Activated CD4-positive, alpha-beta T cell treated with anti-CD3 and anti-CD28 coated beads for 36 hours (primary cell): ENCODE measurements at regions of chr14 and their contacts with region 1.

Region 1: DNA sequence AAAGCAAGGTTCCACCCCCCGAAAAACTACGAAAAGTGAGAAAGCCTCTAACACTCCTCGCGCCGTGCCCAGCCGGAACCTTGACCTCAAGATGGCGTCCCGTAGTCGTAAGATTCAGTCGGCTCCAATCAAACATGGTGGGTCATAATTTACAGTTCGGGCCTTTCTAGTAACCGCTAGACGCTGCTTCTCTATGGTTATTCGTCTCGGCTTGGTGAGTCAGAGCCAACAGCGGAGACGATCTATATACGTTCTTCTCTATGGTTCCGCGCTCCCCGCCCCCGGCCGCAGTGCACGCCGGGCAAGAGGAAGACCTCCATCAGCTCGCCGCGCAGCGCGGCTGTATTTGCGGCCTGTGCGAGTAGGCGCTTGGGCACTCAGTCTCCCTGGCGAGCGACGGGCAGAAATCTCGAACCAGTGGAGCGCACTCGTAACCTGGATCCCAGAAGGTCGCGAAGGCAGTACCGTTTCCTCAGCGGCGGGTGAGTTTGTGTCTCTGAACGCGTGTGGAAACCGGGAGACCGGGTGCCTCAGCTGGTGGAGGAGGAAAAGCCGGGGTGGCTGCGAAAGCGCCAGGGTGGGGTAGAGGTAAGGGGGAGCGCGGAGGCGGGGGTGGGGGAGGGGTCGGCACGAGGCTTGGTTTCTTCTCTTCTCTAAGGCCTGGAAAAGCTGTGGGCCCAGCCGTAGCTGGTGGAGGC is at the start of gene RBM25:
- DNase-seq: peak; percentile 97
- ATAC-seq: peak; percentile 95
- H3K4me3 Mint-ChIP-seq: no peak within 1 kb of the TSS
- H3K27ac Mint-ChIP-seq: no peak within 1 kb of the TSS
- H3K4me1 Mint-ChIP-seq: peaks cover 31% of the 10 kb centered on the region
- H3K27me3 Mint-ChIP-seq: no peaks in the 10 kb centered on the region
- total RNA-seq, gene RBM25: 95.6 to 115 TPM

Region 2: DNA sequence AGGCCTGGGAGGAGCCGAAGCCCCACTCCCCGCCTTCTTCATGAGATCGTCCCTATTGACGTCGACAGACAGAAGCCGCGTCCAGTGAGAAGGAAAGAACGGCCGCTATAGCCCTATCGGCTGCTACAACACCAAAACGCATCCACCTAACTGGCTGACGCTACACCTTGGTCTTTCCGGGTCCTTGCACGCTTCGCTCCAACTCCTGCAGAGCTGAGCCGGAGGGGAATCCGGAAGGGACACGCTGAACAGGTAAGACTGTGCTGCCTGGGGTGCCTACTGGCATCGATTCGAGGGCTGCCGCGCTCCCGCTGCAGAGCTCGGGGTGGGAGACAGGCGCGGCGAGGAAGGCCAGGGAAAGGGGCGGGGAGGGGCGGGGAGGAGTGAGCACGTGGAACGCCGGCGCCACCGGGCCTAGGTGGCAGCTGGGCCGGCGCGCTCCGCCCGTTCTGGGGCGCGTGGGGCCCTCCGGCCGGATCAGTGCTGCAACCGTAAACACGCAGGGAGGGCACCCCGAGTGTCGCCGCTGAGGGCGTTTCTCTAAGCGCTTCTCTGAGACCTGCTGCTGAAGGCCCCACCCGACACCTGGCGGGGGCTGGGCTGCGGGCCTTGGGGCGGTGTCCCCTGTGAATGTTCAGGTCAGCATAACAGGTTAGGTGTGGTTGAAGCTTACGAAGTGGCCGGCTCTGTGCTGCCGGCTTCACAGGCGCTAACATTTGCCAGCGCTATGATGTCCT is 131.9 kb before region 1 on chr14 and contains the start of gene DCAF4:
- CTCF ChIA-PET with region 1: interaction called, 6 read pairs
- POLR2A ChIA-PET with region 1: interaction called, 8 read pairs
- intact Hi-C with region 1: loop called in 1 of 2 experiments (anchors 1 kb)
- DNase-seq: peak; percentile 96
- ATAC-seq: peak; percentile 99
- H3K4me3 Mint-ChIP-seq: peak within 1 kb of the TSS; percentile 89
- H3K27ac Mint-ChIP-seq: peak within 1 kb of the TSS; percentile 87
- H3K4me1 Mint-ChIP-seq: peaks cover 11% of the 10 kb centered on the region
- H3K27me3 Mint-ChIP-seq: no peaks in the 10 kb centered on the region
- total RNA-seq, gene DCAF4: 16.0 to 21.7 TPM

Region 3: GRCh38 chr14:73091852-73092251 is 33.5 kb after region 1 on chr14:
- CTCF ChIA-PET with region 1: no interaction called
- POLR2A ChIA-PET with region 1: no interaction called
- intact Hi-C with region 1: loop called in 1 of 2 experiments (anchors 5 kb)
- DNase-seq: no peak
- ATAC-seq: no peak
- H3K4me3 Mint-ChIP-seq: no peak overlapping the region
- H3K27ac Mint-ChIP-seq: no peak overlapping the region
- H3K4me1 Mint-ChIP-seq: peaks cover 4% of the 10 kb centered on the region
- H3K27me3 Mint-ChIP-seq: no peaks in the 10 kb centered on the region

Region 4: DNA sequence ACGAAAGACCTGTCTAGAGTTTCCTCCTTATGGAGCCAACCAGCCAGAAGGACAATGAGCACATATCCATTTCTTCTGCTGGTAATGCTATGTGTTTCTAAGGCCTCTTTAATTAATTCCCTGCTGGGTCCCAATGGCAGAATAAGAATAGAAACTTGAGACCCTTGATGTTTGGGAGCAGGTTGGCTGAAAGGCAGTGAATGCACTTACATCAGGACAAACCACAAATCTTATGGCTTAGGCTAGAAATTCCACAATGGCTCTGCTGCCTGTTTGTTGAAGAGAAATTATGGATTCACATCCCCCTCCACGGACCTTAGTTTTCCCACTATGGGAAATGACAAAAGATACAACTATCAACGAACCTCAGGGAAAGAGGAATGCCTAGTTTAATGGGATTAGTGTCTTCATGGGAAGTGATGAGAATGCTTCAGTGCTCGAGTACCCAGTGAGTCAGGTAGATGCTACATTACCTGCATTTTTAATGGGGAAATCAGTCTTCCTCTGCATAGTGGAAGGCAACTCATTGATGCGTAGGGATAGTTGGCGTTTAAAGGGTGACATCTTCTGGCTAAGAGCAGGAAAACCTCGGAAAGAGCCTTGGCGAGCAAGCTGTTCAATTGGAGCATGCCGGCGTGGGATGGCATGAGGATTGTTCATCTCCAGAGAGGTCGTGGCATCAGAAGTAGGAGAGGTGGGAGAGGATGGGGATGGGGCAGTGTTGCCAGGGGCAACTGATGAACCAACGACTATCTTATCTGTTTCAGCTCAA is 225.4 kb after region 1 on chr14:
- CTCF ChIA-PET with region 1: no interaction called
- POLR2A ChIA-PET with region 1: no interaction called
- intact Hi-C with region 1: no loop called
- DNase-seq: no peak
- ATAC-seq: no peak
- H3K4me3 Mint-ChIP-seq: no peak overlapping the region
- H3K27ac Mint-ChIP-seq: no peak overlapping the region
- H3K4me1 Mint-ChIP-seq: no peaks in the 10 kb centered on the region
- H3K27me3 Mint-ChIP-seq: no peaks in the 10 kb centered on the region

Region 5: GRCh38 chr14:73368616-73369015 is 310.2 kb after region 1 on chr14:
- CTCF ChIA-PET with region 1: no interaction called
- POLR2A ChIA-PET with region 1: no interaction called
- intact Hi-C with region 1: no loop called
- DNase-seq: no peak
- ATAC-seq: no peak
- H3K4me3 Mint-ChIP-seq: no peak overlapping the region
- H3K27ac Mint-ChIP-seq: no peak overlapping the region
- H3K4me1 Mint-ChIP-seq: peaks cover 6% of the 10 kb centered on the region
- H3K27me3 Mint-ChIP-seq: no peaks in the 10 kb centered on the region

Region 6: DNA sequence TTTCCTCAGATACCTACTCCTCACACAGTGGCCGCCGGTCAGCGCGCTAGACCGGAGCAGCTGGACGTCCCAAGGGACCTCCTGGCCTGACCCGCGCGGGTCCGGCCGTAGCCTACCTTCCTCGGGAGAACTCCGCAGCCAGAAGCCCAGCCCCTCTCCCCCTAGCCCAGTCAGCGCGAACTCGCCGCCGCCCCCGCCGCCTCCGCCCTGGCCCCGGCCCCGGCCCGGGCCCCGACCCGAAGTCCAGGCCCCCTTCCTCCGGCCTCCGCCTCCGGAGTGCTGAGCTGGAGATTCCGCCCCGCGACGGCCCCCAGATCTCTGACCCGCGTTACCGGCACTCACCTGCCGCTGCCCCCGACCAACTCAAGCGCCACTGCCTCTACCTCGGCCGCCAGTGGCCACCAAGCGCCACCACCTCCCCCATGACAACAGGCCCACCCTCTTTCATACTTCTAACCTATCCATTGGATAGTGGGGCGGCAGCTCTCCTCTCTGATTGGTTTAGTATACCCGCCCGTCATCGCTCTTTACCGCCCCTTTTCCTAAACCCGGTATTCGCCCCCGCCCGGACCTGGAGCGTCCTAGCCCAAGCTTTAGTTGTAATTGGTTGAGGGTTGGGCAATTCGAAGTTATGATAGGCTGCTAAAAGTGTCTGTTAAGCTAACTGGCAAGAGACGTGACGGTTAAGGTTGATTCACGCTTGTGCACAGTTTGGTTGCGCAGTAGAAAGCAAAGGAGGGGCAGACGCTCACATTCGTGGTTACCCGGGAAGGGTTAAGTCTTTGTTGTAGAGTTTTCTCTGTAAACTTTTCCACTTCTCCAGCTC is 400.0 kb after region 1 on chr14 and contains the start of gene NUMB:
- CTCF ChIA-PET with region 1: interaction called, 3 read pairs
- POLR2A ChIA-PET with region 1: no interaction called
- intact Hi-C with region 1: loop called in 1 of 2 experiments (anchors 1 kb)
- DNase-seq: peak; percentile 98
- ATAC-seq: peak; percentile 97
- H3K4me3 Mint-ChIP-seq: peak within 1 kb of the TSS; percentile 95
- H3K27ac Mint-ChIP-seq: peak within 1 kb of the TSS; percentile 96
- H3K4me1 Mint-ChIP-seq: peaks cover 45% of the 10 kb centered on the region
- H3K27me3 Mint-ChIP-seq: no peaks in the 10 kb centered on the region
- total RNA-seq, gene NUMB: 35.7 to 54.9 TPM

Region 7: GRCh38 chr14:73651005-73651404 is 592.6 kb after region 1 on chr14:
- CTCF ChIA-PET with region 1: no interaction called
- POLR2A ChIA-PET with region 1: no interaction called
- intact Hi-C with region 1: no loop called
- DNase-seq: no peak
- ATAC-seq: no peak
- H3K4me3 Mint-ChIP-seq: no peak overlapping the region
- H3K27ac Mint-ChIP-seq: no peak overlapping the region
- H3K4me1 Mint-ChIP-seq: peaks cover under 1% of the 10 kb centered on the region
- H3K27me3 Mint-ChIP-seq: no peaks in the 10 kb centered on the region

Region 8: GRCh38 chr14:73785873-73786695 is 727.7 kb after region 1 on chr14:
- CTCF ChIA-PET with region 1: no interaction called
- POLR2A ChIA-PET with region 1: no interaction called
- intact Hi-C with region 1: loop called in 1 of 2 experiments (anchors 1 kb)
- DNase-seq: peak; percentile 81
- ATAC-seq: peak; percentile 67
- H3K4me3 Mint-ChIP-seq: peak overlapping the region; percentile 94
- H3K27ac Mint-ChIP-seq: peak overlapping the region; percentile 93
- H3K4me1 Mint-ChIP-seq: peaks cover 56% of the 10 kb centered on the region
- H3K27me3 Mint-ChIP-seq: no peaks in the 10 kb centered on the region

Region 9: GRCh38 chr14:74302634-74303577 is 1244.5 kb after region 1 on chr14 and contains the start of gene ABCD4:
- CTCF ChIA-PET with region 1: no interaction called
- POLR2A ChIA-PET with region 1: no interaction called
- intact Hi-C with region 1: loop called in 1 of 2 experiments (anchors 2 kb)
- DNase-seq: peak; percentile 91
- ATAC-seq: peak; percentile 95
- H3K4me3 Mint-ChIP-seq: peak within 1 kb of the TSS; percentile 98
- H3K27ac Mint-ChIP-seq: peak within 1 kb of the TSS; percentile 98
- H3K4me1 Mint-ChIP-seq: peaks cover 32% of the 10 kb centered on the region
- H3K27me3 Mint-ChIP-seq: no peaks in the 10 kb centered on the region
- total RNA-seq, gene ABCD4: 43.0 to 43.1 TPM